Lower leg skin (tissue), 4 donors: ENCODE measurements at regions of chr4 and their contacts with region 1.

Region 1: GRCh38 chr4:40099010-40099409 is 42.4 kb downstream of the N4BP2 start:
- DNase-seq: no peak
- H3K4me3 ChIP-seq: no peak overlapping the region
- CTCF ChIP-seq: no peak
- POLR2A ChIP-seq: no peak

Region 2: DNA sequence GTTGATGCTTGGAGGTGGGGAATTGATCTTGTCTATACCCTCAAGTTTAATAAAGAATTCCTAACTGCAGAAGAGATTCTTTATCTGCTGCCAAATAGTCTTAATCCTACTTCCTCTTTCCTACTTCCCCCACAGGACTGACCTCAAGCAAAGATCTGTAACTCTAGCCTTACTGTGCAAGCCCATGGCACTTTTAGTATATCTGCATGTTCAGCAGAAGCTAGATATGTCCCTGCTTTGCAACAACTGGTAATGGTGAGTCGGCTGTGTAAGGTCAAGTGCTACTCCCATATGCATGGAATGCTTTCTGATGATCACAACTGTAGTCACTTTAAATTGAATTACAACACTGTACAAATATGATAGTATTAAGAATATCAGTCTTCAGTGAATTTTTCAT is 95.0 kb before region 1 on chr4:
- intact Hi-C with region 1: loop called (anchors 10 kb)
- DNase-seq: no peak
- H3K4me3 ChIP-seq: no peak overlapping the region
- CTCF ChIP-seq: no peak
- POLR2A ChIP-seq: no peak